HepG2 (cell line): ENCODE measurements at regions of chr11 and their contacts with region 1.

Region 1: DNA sequence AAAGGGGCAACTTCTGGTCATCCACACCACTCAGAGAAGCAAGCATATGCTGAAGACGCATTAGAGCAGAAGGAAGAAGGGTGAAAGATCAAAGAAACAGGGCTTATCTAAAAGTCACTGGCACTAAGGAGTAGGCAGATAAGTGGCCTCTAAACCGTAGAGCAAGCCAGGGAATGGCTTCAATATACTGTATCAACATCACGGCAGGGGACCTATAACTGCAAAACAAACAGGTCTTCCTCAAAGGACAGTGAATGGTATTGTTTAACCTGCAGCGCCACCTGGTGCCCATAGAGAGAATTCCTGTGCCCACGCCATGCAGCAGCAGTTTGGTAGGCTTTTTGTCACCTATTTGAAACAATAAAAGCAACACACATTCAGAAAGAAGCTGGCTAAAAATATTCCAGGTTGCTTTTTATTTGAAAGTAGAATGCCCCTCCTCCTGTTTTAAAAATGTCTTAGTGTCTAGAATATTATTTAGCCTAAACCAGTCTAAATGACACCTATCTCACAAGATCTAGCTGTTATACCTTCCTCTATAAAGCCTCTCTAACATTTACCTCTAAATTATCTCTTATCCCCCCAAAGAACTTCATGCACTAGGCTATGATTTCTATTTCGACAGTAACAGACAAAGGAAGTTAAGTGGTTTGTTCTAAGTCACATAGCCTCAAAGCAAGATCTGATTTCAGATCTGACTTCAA is 21.8 kb downstream of the SNX19 start:
- DNase-seq: peak; percentile 71
- ATAC-seq: peak; percentile 98
- H3K4me3 ChIP-seq: no peak overlapping the region
- H3K27ac ChIP-seq: no peak overlapping the region
- H3K4me1 ChIP-seq: no peaks in the 10 kb centered on the region
- H3K27me3 ChIP-seq: no peaks in the 10 kb centered on the region
- CTCF ChIP-seq: peak; percentile 89
- EP300 ChIP-seq: no peak
- POLR2A ChIP-seq: no peak
- RAD21 ChIP-seq: peak; percentile 82

Region 2: DNA sequence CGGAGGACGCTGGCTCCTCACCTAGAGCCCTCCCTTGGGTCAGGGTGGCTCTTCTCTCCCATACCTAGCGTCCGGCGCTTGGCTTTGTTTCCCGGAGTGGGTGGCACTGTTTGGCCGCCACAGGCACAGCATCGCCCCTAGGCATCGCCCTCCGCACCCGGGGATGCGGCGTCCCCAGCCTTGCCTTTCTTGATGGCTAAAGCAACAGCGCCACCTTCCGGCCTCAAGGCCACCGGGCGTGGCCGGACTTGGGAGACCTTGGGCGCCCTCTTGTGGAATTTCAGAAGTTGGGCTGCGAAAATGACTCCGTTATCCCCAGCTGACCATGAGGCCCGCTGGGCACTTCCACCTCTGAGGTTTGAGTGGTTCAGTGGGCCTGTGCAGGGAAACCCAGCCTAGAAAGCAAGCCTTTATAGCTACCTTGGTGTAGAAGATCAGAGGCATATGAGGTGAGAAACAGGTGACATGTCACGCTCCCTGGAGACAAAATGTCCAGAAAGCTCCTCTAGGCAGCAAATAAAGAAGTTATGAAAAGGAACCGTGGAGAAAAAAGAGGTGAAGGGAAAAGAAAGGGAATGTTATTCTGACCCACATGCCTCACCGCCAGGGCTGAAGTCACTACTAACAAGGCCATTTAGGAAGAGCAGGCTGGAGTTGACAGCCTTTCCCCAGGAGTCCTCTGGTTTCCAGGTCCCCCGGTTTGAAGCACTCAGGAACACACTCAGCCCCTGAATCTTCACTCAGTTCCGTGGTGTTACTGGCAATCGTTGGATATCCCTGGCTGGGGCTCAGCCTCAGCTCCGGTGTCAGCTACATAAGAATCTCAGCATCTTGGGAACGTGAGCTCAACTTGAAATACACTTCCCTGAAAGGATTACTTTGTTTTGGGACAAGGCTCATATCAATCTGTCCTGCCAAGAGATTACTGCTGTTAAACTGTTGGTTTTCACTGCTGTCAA is 32.3 kb before region 1 on chr11:
- CTCF ChIA-PET with region 1: interaction called, 29 read pairs
- POLR2A ChIA-PET with region 1: no interaction called
- in situ Hi-C with region 1: no loop called
- intact Hi-C with region 1: loop called (anchors 1 kb)
- DNase-seq: peak; percentile 83
- ATAC-seq: peak; percentile 82
- H3K4me3 ChIP-seq: no peak overlapping the region
- H3K27ac ChIP-seq: no peak overlapping the region
- H3K4me1 ChIP-seq: peaks cover 17% of the 10 kb centered on the region
- H3K27me3 ChIP-seq: peaks cover 0 to 13% of the 10 kb centered on the region in 2 experiments; a peak in 3 of 5 replicates
- CTCF ChIP-seq: peak; percentile 99
- EP300 ChIP-seq: no peak
- POLR2A ChIP-seq: no peak
- RAD21 ChIP-seq: peak; percentile 98